Lower lobe of right lung (tissue), 2 donors: ENCODE measurements at regions of chr12 and their contacts with region 1.

Region 1: DNA sequence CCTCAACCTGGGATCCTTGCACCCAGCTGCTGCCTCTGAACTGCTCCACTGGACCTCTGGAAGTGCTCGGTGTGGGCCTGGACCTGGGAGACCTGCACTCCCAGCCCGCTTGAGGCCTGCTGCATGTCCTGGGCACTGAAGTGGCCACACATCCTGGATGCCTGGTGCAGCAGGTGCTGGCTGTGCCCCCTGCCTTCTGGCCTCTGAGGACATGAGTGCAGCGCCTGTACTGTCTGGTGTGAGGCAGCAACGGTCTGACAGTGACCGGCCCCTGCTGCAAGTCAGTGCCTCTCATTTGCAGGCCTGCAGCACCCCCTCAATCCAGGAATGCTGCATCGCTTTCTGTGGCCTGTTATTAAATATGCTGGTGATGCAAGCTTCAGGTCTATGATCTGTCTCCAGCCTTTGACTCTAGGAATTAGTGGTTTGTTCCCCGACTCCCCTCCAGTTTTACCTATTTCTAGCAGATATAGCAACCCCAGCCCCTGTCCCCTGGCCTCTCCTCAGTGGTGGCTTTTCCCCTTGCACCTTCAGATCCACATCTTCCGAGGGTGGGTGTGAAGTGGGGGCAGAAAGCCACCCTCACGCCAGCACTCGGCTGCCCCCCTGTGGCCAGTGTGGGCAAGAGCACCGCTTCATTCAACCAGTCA is 3.6 kb downstream of the SMIM41 start:
- DNase-seq: peak; percentile 68
- ATAC-seq: peak; percentile 66 to 68
- H3K4me3 ChIP-seq: no peak overlapping the region
- H3K27ac ChIP-seq: peak overlapping the region; percentile 81
- H3K4me1 ChIP-seq: peaks cover 34% of the 10 kb centered on the region
- H3K27me3 ChIP-seq: peaks cover 5% of the 10 kb centered on the region
- CTCF ChIP-seq: peak; percentile 97

Region 2: GRCh38 chr12:52029686-52030085 is 53.4 kb before region 1 on chr12:
- intact Hi-C with region 1: loop called (anchors 5 kb)
- DNase-seq: peak; percentile 67
- ATAC-seq: peak; percentile 40 to 50
- H3K4me3 ChIP-seq: no peak overlapping the region
- H3K27ac ChIP-seq: peak overlapping the region; percentile 6
- H3K4me1 ChIP-seq: peaks cover 40% of the 10 kb centered on the region
- H3K27me3 ChIP-seq: no peaks in the 10 kb centered on the region
- CTCF ChIP-seq: no peak